AG04449 (cell line): ENCODE measurements at regions of chr9 and their contacts with region 1.

Region 1: DNA sequence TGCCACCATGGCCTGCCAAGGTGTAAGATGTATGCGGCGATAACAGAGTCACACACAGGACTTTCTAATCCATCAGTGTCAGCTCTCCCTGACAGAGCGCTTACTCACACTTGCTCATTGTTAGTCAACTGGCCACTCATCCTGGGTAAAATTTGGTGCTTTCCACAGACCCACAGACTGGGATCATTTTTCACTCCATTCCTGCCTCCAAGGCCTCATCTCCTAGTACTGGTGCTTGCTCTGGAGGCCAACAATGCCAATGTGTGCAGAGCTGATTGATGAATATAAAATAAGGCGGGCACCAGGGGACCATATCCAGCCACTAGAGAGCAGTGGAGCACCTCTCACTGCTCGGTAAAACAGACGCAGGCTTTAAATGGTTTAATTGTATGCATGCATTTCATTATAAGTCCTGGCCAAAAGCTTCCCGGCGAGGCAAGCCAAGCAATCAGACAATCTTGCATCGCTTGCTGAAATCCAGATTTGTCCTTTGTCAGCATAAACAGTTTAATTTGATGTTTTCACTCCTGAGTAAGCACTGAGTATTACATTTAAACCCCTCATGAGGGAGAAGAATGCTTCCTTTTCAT is 22.3 kb downstream of the PSMB7 start:
- DNase-seq: peak; percentile 63
- H3K4me3 ChIP-seq: no peak overlapping the region
- CTCF ChIP-seq: peak; percentile 55

Region 2: GRCh38 chr9:124375726-124376125 is 17.2 kb before region 1 on chr9:
- CTCF ChIA-PET with region 1: interaction called, 13 read pairs
- POLR2A ChIA-PET with region 1: interaction called, 4 read pairs
- DNase-seq: no peak
- H3K4me3 ChIP-seq: no peak overlapping the region
- CTCF ChIP-seq: no peak

Region 3: GRCh38 chr9:124381170-124381945 is 11.6 kb before region 1 on chr9:
- CTCF ChIA-PET with region 1: interaction called, 177 read pairs
- POLR2A ChIA-PET with region 1: interaction called, 4 read pairs
- DNase-seq: no peak
- H3K4me3 ChIP-seq: no peak overlapping the region
- CTCF ChIP-seq: no peak

Region 4: DNA sequence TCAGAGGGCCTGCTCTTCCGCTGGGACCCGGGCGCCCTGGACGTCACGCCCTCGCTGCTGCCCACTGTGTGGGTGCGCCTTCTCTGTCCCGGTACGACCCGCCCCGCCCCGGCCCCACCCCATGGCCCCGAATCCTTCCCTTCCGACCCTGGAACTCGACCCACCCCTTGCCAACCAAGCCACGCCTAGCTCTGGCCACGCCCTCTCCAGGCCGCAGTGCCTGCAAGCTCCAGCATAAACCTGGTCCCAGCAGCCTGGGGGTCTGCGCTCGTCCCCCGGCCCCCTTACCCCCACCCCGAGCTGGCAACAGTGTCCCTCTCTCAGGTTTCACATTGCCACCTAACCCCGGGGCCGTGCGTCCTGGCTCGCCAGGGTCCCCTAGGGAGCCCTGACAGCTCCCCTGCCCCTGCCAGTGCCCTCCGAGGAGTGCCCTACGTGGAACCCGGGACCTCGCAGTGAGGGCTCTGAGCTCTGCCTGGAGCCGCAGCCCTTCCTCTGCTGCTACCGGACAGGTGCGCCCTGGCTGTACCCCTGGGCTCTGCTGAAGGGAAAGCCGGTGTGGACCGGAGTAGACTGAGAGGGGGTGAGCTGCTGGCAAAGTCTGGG is 60.7 kb after region 1 on chr9:
- CTCF ChIA-PET with region 1: no interaction called
- POLR2A ChIA-PET with region 1: no interaction called
- DNase-seq: no peak
- H3K4me3 ChIP-seq: no peak overlapping the region
- CTCF ChIP-seq: no peak